GM10248 (cell line): ENCODE measurements at regions of chr14 and their contacts with region 1.

Region 1: GRCh38 chr14:67680121-67680602 is 5.7 kb upstream of the VTI1B start:
- DNase-seq: peak; percentile 82
- CTCF ChIP-seq: no peak

Region 2: GRCh38 chr14:67695394-67695949 is 15.3 kb after region 1 on chr14 and contains the start of gene RDH11:
- CTCF ChIA-PET with region 1: interaction called, 10 read pairs
- POLR2A ChIA-PET with region 1: no interaction called
- DNase-seq: peak; percentile 88
- CTCF ChIP-seq: no peak